ENCODE measurements at regions of chr18 and their contacts with region 1.

Region 1: DNA sequence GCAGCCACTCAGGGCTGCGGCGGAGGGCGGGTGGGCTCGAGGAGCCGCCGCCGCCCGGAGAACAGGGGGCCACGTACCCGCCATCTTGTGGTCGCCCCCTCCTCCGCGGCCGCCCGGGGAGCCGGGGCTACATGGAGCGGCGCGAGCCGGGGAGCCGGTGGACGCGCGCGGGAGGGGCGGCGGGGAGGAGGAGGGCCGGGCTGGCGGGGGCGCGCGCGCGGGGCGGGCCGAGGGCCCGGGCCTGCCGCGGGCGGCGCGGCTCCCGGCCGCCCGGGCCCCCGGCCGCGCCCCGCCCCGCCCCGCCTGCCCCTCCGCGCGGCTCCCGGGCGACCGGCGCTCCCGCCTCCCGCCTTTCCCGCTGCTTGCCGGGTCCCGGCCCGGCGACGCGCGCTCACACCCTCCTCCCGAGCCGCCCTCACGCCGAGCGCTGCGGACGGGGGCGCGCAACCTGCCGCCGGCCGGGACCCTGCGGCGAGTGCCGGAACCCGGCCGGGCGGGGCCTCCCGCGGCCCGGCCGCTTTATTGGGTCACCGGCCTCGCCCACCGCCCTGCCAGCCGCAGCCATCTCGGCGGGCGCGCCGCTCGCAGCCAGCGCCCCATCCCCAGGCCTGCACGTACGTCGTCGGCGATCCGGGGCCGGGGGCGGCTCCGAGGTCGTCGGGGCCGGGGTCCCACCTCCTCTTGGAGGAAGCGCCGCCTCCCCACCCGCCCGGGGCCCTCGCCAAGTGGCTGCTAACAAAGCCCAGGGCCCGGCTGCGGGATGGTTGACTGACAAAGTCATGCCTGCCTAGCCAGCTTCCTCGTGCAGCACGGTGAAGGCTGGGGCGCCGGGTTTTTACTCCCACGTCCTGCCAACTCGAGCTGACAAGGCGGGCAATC is at the start of gene PPP4R1:
- DNase-seq: peak; percentile 28 to 86
- H3K4me3 ChIP-seq: peak within 1 kb of the TSS; percentile 71 to 89
- H3K27ac ChIP-seq: peak within 1 kb of the TSS; percentile 95 to 98
- H3K4me1 ChIP-seq: peaks cover 11 to 23% of the 10 kb centered on the region in 2 donors
- H3K27me3 ChIP-seq: no peaks in the 10 kb centered on the region
- CTCF ChIP-seq: no peak
- total RNA-seq, gene PPP4R1: 34.4 TPM

Region 2: DNA sequence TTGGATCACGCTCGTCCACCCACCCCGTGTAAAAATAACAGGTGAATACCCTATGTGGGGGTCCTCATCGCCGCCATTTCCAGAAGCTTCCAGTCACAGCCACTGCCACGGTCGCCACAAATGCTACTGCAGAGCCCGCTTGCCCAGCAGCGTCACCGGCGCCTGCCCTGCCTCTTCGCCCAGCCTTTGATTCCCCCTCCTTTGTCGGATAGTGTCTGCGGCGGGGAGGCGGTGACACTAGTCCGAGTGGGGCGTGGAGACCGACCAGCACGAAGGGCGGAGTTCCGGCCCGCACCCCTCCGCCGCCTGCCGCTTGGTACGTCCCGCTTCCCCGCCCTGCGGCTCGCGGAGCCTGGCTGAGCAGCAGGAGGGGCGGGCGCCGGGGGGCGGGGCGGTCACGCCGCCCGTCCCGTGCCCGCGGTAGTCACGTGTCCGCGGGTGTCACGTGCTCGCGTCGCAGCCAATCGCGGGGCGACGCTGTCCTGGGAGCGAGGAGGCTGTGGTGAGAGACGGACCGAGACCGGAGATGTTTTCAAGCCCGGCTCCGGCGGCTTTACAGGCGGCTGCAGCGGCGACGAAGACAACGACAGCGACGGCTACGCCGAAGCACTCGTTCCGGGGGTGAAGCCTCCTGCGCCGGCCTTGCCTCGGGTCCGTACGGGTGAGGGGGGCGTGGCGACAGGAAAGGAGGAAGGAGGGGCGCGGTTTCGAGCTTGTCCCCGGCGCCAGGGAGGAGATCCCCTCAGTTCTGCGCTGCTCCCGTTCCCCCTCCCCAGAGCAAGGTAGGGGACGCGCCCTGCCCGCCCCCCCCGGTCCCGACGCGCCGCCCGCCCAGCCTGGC is 478.1 kb before region 1 on chr18 and contains the start of gene ANKRD12:
- intact Hi-C with region 1: loop called (anchors 10 kb)
- DNase-seq: peak; percentile 87 to 99
- H3K4me3 ChIP-seq: peak within 1 kb of the TSS; percentile 87 to 93
- H3K27ac ChIP-seq: peak within 1 kb of the TSS; percentile 96 to 99
- H3K4me1 ChIP-seq: peaks cover 4 to 37% of the 10 kb centered on the region in 2 donors
- H3K27me3 ChIP-seq: no peaks in the 10 kb centered on the region
- CTCF ChIP-seq: no peak
- total RNA-seq, gene ANKRD12: 11.4 TPM

Region 3: DNA sequence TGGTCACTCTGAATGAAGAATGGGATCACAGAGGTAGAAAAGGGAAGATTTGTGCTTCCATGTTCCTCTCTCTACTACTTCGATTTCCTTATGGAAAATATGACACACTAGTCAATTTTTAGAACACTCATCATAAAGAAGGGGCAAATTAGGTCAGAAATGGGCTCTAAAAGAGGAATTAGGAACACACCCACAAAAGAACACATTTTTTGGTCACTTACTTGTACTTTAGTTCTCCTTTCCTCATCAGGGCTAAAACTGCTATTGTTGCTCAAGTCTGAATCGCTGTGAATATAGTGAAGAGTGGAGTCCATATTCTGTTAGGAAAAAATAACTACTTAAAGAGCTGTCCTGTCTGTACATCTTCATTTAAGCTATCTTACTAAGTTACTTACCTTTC is 52.9 kb before region 1 on chr18:
- intact Hi-C with region 1: no loop called
- DNase-seq: no peak
- H3K4me3 ChIP-seq: no peak overlapping the region
- H3K27ac ChIP-seq: no peak overlapping the region
- H3K4me1 ChIP-seq: peaks cover 0 to 15% of the 10 kb centered on the region in 2 donors
- H3K27me3 ChIP-seq: no peaks in the 10 kb centered on the region
- CTCF ChIP-seq: no peak

Region 4: DNA sequence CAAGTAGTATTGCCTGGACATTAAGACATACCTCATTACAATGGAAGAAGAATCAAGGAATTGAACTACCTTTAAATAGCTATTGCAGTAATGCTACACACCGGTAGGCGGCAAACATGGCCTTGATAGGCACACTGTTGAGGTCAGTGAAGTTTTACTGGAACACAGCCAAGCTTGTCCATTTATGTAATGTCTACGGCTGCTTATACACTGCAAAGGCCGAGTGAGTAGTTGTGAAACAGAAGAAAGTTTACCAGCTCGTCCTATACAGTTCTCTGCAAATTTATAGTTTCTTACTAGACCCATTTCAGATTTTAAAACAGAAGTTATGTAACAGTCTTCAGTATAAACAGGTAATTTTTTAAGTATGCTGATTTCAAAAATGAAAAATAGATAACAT is 39.1 kb before region 1 on chr18:
- intact Hi-C with region 1: loop called (anchors 2 kb)
- DNase-seq: peak in 1 of 2 donors; percentile 91
- H3K4me3 ChIP-seq: no peak overlapping the region
- H3K27ac ChIP-seq: peak overlapping the region in 1 of 2 donors; percentile 6
- H3K4me1 ChIP-seq: no peaks in the 10 kb centered on the region
- H3K27me3 ChIP-seq: no peaks in the 10 kb centered on the region
- CTCF ChIP-seq: peak; percentile 75 to 86 (median 76)

Region 5: GRCh38 chr18:9673296-9674251 is 58.9 kb after region 1 on chr18:
- intact Hi-C with region 1: loop called (anchors 2 kb)
- DNase-seq: peak in 1 of 2 donors; percentile 68
- H3K4me3 ChIP-seq: no peak overlapping the region
- H3K27ac ChIP-seq: no peak overlapping the region
- H3K4me1 ChIP-seq: peaks cover 2 to 3% of the 10 kb centered on the region in 2 donors
- H3K27me3 ChIP-seq: no peaks in the 10 kb centered on the region
- CTCF ChIP-seq: peak in 2 of 3 experiments; percentile 32 to 49

Region 6: GRCh38 chr18:9771261-9771976 is 156.8 kb after region 1 on chr18:
- intact Hi-C with region 1: loop called (anchors 2 kb)
- DNase-seq: peak; percentile 39 to 92
- H3K4me3 ChIP-seq: no peak overlapping the region
- H3K27ac ChIP-seq: peak overlapping the region in 1 of 2 donors; percentile 35
- H3K4me1 ChIP-seq: peaks cover 0 to 5% of the 10 kb centered on the region in 2 donors
- H3K27me3 ChIP-seq: no peaks in the 10 kb centered on the region
- CTCF ChIP-seq: peak; percentile 94 to 99 (median 98)

Region 7: GRCh38 chr18:9913526-9914333 is 299.1 kb after region 1 on chr18 and contains the start of gene VAPA:
- intact Hi-C with region 1: loop called (anchors 1 kb)
- DNase-seq: peak; percentile 85 to 97
- H3K4me3 ChIP-seq: peak within 1 kb of the TSS; percentile 96 to 97
- H3K27ac ChIP-seq: peak within 1 kb of the TSS; percentile 99 to 100
- H3K4me1 ChIP-seq: peaks cover 3 to 21% of the 10 kb centered on the region in 2 donors
- H3K27me3 ChIP-seq: no peaks in the 10 kb centered on the region
- CTCF ChIP-seq: no peak
- total RNA-seq, gene VAPA: 109 TPM

Region 8: GRCh38 chr18:10525371-10526210 is 911.0 kb after region 1 on chr18 and contains the start of gene NAPG:
- intact Hi-C with region 1: loop called (anchors 2 kb)
- DNase-seq: peak; percentile 63 to 94
- H3K4me3 ChIP-seq: peak within 1 kb of the TSS; percentile 74 to 80
- H3K27ac ChIP-seq: peak within 1 kb of the TSS; percentile 89 to 90
- H3K4me1 ChIP-seq: peaks cover 0 to 7% of the 10 kb centered on the region in 2 donors
- H3K27me3 ChIP-seq: no peaks in the 10 kb centered on the region
- CTCF ChIP-seq: no peak
- total RNA-seq, gene NAPG: 31.1 TPM